ENCODE measurements at regions of chr13 and their contacts with region 1.

Region 1: GRCh38 chr13:24020375-24020830 is 123.1 kb upstream of the C1QTNF9B start:
- DNase-seq: peak; percentile 81
- ATAC-seq: peak; percentile 64
- H3K4me3 ChIP-seq: no peak overlapping the region
- H3K27ac ChIP-seq: no peak overlapping the region
- H3K4me1 ChIP-seq: 0 out of 2 replicates have a peak, but pooled peaks cover 4% of the 10 kb centered on the region
- H3K27me3 ChIP-seq: no peaks in the 10 kb centered on the region
- CTCF ChIP-seq: peak; percentile 92

Region 2: DNA sequence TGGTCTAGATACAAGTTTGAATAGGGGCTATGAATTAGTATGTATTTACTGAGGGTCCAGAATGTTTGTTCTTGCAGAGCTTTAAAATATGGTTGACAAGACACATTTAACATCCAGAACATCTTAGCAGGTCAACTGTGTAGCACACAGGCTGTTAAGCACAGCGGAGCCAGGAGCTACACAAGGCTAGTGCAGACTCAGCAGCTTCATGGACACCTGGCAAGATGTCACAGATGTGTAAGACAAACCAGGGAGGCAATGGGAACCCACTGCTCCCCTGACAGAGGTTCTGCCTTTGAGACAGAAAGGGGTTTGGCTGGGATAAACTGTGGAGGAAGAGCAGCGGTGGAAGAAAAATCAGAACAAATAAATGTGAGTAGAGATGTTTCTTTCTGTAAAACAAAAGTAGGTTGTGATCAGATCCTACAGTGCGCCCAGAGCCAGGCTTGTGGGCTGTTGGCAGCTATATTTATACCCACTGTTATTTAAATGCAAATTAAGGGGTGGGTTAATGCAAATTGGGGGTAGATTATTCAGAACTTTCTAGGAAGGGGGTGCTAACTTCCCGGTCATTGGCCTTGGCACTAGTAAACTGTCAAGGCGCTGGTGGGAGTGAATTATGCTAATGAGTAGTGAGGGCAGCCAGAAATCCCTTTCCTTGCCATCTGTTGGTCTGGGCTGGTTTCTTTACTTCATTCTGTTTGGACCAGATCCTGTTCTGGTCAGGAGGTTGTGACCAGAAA is 164.2 kb before region 1 on chr13:
- CTCF ChIA-PET with region 1: no interaction called
- POLR2A ChIA-PET with region 1: no interaction called
- intact Hi-C with region 1: no loop called
- DNase-seq: no peak
- ATAC-seq: no peak
- H3K4me3 ChIP-seq: no peak overlapping the region
- H3K27ac ChIP-seq: no peak overlapping the region
- H3K4me1 ChIP-seq: peaks cover 36% of the 10 kb centered on the region
- H3K27me3 ChIP-seq: no peaks in the 10 kb centered on the region
- CTCF ChIP-seq: no peak

Region 3: DNA sequence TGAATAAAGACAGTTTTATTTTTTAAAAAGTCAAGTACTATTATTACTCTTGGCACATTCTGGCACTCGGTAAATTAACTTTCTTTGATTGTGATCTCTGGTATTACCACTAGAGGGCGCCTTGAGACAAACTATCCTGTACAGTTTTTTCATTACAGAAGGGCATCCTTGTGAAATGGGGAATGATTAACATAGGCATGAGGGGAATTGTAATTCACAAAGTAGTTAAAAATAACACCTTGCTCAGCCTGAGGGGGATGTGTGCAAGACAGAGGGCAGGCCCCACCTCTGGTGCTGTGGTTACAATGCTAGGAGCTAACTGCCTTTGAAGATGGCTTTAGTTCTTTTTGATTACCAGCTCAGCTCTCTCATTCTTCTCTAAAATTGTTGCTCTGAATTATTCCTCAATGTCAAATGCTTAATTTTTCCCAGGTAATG is 98.9 kb before region 1 on chr13:
- CTCF ChIA-PET with region 1: no interaction called
- POLR2A ChIA-PET with region 1: no interaction called
- intact Hi-C with region 1: loop called (anchors 10 kb)
- DNase-seq: peak; percentile 72
- ATAC-seq: no peak
- H3K4me3 ChIP-seq: no peak overlapping the region
- H3K27ac ChIP-seq: no peak overlapping the region
- H3K4me1 ChIP-seq: peaks cover 10% of the 10 kb centered on the region
- H3K27me3 ChIP-seq: no peaks in the 10 kb centered on the region
- CTCF ChIP-seq: peak; percentile 91

Region 4: DNA sequence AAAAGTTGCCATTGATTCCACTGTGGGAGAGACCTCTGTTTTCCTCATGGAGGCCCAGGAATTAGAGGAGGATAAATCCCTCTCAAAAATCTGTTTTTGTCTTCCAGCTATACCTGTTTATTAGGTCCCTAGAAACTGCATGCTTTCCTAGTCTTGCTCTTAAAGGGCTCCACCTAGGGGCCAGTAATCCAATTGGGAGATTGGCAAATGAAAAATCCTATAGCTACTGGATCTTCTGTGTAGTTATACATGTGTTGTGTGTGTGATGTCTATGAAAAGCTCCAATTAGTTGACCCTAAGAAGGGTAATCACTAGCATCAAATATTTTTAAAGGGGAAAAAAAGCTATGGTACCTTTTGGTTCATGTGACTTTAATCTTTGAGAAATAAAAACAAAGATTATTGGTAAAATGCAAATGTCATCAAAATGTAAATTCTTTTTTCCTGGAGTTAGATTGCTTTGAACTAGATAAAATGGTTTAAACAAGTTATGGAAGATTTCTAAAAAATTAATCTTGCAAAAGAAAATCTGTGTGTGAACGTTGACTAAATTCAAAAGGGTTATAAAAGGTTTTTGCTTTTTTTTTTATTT is 59.7 kb before region 1 on chr13:
- CTCF ChIA-PET with region 1: interaction called, 3 read pairs
- POLR2A ChIA-PET with region 1: no interaction called
- intact Hi-C with region 1: loop called (anchors 5 kb)
- DNase-seq: peak; percentile 73
- ATAC-seq: peak; percentile 14; the same call in 1 of the 2 replicates
- H3K4me3 ChIP-seq: no peak overlapping the region
- H3K27ac ChIP-seq: no peak overlapping the region
- H3K4me1 ChIP-seq: peaks cover 45% of the 10 kb centered on the region
- H3K27me3 ChIP-seq: no peaks in the 10 kb centered on the region
- CTCF ChIP-seq: peak; percentile 84

Region 5: GRCh38 chr13:24053519-24054251 is 33.3 kb after region 1 on chr13:
- CTCF ChIA-PET with region 1: no interaction called
- POLR2A ChIA-PET with region 1: interaction called, 3 read pairs
- intact Hi-C with region 1: loop called (anchors 1 kb)
- DNase-seq: peak; percentile 91
- ATAC-seq: peak; percentile 89
- H3K4me3 ChIP-seq: 0 out of 2 replicates have a peak overlapping the region, but pooled peaks have one; percentile 0
- H3K27ac ChIP-seq: no peak overlapping the region
- H3K4me1 ChIP-seq: peaks cover 34% of the 10 kb centered on the region
- H3K27me3 ChIP-seq: no peaks in the 10 kb centered on the region
- CTCF ChIP-seq: peak; percentile 87

Region 6: DNA sequence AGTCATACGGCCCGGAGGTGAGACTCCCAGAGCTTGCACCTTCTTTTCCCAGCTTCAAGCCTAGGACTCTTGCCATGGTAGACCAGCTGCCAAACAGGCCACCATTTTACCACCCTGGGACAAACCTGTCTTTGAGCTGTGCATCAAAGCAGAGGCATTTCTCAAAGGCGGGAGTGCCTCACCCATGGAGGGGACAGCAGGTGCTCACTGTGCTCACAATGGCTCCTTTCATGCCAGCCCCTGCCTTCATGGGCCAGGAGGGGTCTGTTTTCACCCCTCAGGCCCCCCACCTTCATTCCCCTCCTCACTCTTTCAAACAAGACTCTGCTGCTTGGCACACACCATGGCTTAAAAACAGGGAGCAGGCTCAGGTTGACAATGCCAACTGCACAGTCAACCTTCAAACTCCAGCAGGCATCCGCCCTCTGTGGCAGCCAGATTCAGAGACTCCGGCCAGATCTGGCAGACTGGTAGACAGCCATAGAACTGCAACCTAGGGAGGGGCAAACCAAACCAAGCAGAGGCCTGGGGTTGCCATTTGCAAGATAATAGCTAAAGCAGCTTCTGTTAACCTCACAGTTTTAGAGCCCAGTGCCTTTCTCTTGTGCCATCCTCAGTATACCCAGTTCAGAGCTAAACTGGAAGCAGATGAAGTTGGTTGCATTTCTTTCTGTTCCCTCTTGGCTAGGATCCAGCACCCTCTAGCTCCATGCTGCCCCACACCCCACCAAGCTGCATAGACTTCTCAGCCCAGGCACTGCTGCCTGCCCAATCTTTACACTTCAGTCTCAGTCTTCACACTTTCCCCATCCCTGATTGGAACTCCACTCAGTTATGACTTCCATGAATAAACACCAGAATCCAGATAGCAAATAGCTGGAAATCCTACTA is 46.2 kb after region 1 on chr13:
- CTCF ChIA-PET with region 1: no interaction called
- POLR2A ChIA-PET with region 1: no interaction called
- intact Hi-C with region 1: no loop called
- DNase-seq: no peak
- ATAC-seq: no peak
- H3K4me3 ChIP-seq: no peak overlapping the region
- H3K27ac ChIP-seq: no peak overlapping the region
- H3K4me1 ChIP-seq: peaks cover 8% of the 10 kb centered on the region; the same call in 1 of the 2 replicates
- H3K27me3 ChIP-seq: no peaks in the 10 kb centered on the region
- CTCF ChIP-seq: no peak

Region 7: GRCh38 chr13:24100188-24100587 is 79.8 kb after region 1 on chr13:
- CTCF ChIA-PET with region 1: no interaction called
- POLR2A ChIA-PET with region 1: no interaction called
- intact Hi-C with region 1: no loop called
- DNase-seq: no peak
- ATAC-seq: no peak
- H3K4me3 ChIP-seq: no peak overlapping the region
- H3K27ac ChIP-seq: no peak overlapping the region
- H3K4me1 ChIP-seq: no peaks in the 10 kb centered on the region
- H3K27me3 ChIP-seq: no peaks in the 10 kb centered on the region
- CTCF ChIP-seq: no peak

Region 8: GRCh38 chr13:24220086-24220703 is 199.8 kb after region 1 on chr13:
- CTCF ChIA-PET with region 1: no interaction called
- POLR2A ChIA-PET with region 1: interaction called, 4 read pairs
- intact Hi-C with region 1: loop called (anchors 1 kb)
- DNase-seq: peak; percentile 88
- ATAC-seq: peak; percentile 83
- H3K4me3 ChIP-seq: no peak overlapping the region
- H3K27ac ChIP-seq: peak overlapping the region; percentile 71
- H3K4me1 ChIP-seq: peaks cover 40% of the 10 kb centered on the region
- H3K27me3 ChIP-seq: no peaks in the 10 kb centered on the region
- CTCF ChIP-seq: peak; percentile 86

Region 9: DNA sequence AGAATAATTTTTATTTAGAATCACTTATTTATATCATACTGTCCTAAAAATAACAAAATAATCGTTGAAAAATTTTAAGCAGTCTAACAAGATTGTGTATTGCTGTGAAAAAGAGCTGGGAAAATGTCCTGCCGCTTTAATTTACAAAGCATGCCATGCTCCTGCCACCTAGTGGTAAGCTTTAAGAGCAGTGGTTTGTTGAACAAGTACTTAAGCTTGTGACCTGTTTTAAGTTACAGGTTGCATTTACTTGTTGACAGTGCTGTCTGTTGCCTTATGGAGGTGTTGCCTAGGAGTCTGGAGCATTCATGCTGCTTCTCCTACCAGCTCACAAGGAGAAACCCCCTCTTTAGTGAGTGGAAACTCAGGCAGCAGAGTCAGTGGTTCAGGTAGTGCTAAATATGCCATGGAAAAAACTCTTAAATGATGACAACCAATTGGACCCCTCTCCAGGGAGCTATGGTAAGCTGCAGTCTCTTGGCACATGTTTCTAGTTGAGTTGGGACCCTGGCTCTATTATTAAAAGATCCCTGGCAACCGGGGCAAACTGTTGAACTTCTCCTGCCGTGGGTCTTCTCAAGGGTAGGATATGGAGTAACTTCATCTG is 208.6 kb after region 1 on chr13:
- CTCF ChIA-PET with region 1: interaction called, 5 read pairs
- POLR2A ChIA-PET with region 1: no interaction called
- intact Hi-C with region 1: loop called (anchors 1 kb)
- DNase-seq: peak; percentile 74
- ATAC-seq: peak; percentile 53; the same call in 1 of the 2 replicates
- H3K4me3 ChIP-seq: no peak overlapping the region
- H3K27ac ChIP-seq: no peak overlapping the region
- H3K4me1 ChIP-seq: peaks cover 10% of the 10 kb centered on the region
- H3K27me3 ChIP-seq: no peaks in the 10 kb centered on the region
- CTCF ChIP-seq: peak; percentile 85

Region 10: GRCh38 chr13:24338721-24339120 is 318.3 kb after region 1 on chr13:
- CTCF ChIA-PET with region 1: no interaction called
- POLR2A ChIA-PET with region 1: no interaction called
- intact Hi-C with region 1: no loop called
- DNase-seq: no peak
- ATAC-seq: no peak
- H3K4me3 ChIP-seq: no peak overlapping the region
- H3K27ac ChIP-seq: no peak overlapping the region
- H3K4me1 ChIP-seq: peaks cover 10% of the 10 kb centered on the region
- H3K27me3 ChIP-seq: no peaks in the 10 kb centered on the region
- CTCF ChIP-seq: no peak

Measured in PC-3 (cell line).